GM12878 (cell line): ENCODE measurements at regions of chr11 and their contacts with region 1.

Region 1: DNA sequence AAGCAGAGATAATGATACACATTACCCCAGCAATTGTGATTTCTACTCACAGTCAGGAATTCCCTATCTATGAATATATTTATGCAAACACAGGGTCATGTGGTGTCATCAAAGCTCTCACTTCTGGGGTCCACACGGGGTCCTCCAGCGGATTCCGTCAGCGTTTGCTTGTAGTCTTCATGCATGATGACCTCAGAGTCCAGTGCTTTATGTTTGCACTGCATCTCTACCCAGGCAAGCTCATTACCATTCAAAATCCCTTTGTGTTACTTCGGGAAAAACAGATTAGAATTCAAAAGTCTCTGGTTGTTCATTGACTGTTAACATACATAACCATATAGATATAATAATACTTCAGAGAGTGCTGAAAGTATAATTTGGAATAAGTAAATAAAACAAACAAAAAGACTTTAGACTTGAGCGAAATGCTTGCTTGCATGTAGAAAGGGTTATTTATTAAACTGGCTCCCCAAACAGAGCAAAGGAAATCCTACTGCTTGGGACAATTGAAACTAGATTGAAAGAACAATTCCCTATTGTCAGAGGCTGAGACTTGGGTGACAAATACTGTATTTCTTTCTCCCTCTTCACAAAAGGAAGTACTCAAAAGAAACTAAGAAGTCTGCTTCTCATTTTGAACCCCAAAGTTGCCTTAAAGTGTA is 423.1 kb downstream of the ETS1 start:
- DNase-seq: no peak
- ATAC-seq: no peak
- H3K4me3 ChIP-seq: no peak overlapping the region
- H3K27ac ChIP-seq: no peak overlapping the region
- H3K4me1 ChIP-seq: no peaks in the 10 kb centered on the region
- H3K27me3 ChIP-seq: no peaks in the 10 kb centered on the region; a peak in 2 of 4 replicates
- CTCF ChIP-seq: no peak
- EP300 ChIP-seq: no peak
- POLR2A ChIP-seq: no peak
- RAD21 ChIP-seq: no peak

Region 2: DNA sequence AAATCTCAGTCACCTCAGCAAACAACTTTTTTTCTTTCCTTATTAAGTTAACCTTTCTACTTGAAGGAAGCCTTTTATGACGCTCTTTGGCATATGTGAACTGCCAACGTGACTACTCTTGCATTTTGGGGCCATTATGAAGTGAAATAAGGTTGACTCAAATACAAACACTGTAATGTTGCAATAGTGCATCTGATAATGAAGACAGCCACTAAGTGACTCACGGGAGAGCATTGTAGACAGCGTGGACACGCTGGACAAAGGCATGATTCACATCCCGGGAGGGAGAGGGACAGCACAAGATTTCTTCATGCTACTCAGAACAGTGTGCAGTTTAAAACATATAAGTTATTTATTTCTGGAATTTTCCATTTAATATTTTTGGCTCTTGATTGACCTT is 137.6 kb before region 1 on chr11:
- CTCF ChIA-PET with region 1: interaction called, 15 read pairs
- POLR2A ChIA-PET with region 1: no interaction called
- RAD21 ChIA-PET with region 1: no interaction called
- SMC1A ChIA-PET with region 1: no interaction called
- in situ Hi-C with region 1: loop called (anchors 5 kb)
- intact Hi-C with region 1: no loop called
- DNase-seq: no peak
- ATAC-seq: no peak
- H3K4me3 ChIP-seq: no peak overlapping the region
- H3K27ac ChIP-seq: no peak overlapping the region
- H3K4me1 ChIP-seq: no peaks in the 10 kb centered on the region
- H3K27me3 ChIP-seq: no peaks in the 10 kb centered on the region; a peak in 2 of 4 replicates
- CTCF ChIP-seq: no peak
- EP300 ChIP-seq: no peak
- POLR2A ChIP-seq: no peak
- RAD21 ChIP-seq: no peak